Activated CD4-positive, alpha-beta memory T cell treated with anti-CD3 and anti-CD28 coated beads for 36 hours (primary cell): ENCODE measurements at regions of chr10 and their contacts with region 1.

Region 1: DNA sequence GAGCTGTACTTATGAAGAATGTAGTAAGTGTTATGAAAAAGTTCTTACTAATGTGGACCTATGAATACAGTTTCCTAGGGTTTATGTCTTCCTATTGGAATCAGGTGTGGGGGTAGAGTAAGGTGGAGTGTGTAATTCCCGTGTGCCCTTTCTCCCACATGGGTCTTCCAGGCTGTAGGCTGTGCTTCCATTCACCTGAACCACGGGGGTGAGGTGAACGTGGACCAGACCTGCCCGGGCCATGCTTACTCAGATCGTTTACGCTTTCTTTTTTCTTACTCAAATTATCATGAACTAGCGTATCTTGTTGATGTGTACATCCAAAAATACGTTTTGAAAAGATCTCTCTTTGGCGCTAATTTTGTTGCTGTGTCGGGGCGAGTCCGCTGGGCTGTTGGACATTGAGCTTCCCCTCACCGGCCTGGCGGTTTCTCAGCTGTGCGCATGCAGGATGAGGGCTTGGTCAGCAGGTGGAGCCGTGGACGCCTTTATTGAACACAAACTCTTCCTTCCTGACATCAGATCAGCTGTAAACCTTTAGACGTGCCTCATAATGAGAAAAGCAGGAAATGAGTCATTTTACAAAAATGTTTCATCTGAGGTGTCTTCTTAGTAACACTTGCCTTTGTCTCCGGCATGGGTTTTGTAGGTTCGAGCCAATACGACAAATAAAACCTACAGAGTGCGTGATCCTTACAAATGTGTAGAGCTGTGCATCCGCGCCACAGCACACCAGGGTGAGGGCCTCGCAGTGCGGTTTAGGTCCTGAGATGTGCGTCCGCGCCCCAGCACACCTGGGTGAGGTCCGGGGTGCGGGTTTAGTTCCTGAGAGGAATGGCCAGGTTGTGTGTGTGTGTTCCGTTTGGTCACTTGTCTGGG is 53.8 kb downstream of the WDR37 start:
- DNase-seq: peak; percentile 89
- H3K4me3 Mint-ChIP-seq: peak overlapping the region; percentile 10
- H3K27ac Mint-ChIP-seq: peak overlapping the region; percentile 77
- H3K4me1 Mint-ChIP-seq: peaks cover 24% of the 10 kb centered on the region
- H3K27me3 Mint-ChIP-seq: no peaks in the 10 kb centered on the region

Region 2: GRCh38 chr10:987870-988666 is 122.0 kb before region 1 on chr10 and contains the start of gene GTPBP4:
- CTCF ChIA-PET with region 1: no interaction called
- POLR2A ChIA-PET with region 1: no interaction called
- intact Hi-C with region 1: loop called (anchors 1 kb)
- DNase-seq: peak; percentile 98
- H3K4me3 Mint-ChIP-seq: peak within 1 kb of the TSS; percentile 93
- H3K27ac Mint-ChIP-seq: peak within 1 kb of the TSS; percentile 92
- H3K4me1 Mint-ChIP-seq: peaks cover 34% of the 10 kb centered on the region
- H3K27me3 Mint-ChIP-seq: no peaks in the 10 kb centered on the region
- total RNA-seq, gene GTPBP4: 107 TPM

Region 3: GRCh38 chr10:1094112-1095057 is 15.6 kb before region 1 on chr10:
- CTCF ChIA-PET with region 1: interaction called, 16 read pairs
- POLR2A ChIA-PET with region 1: interaction called, 3 read pairs
- intact Hi-C with region 1: loop called (anchors 1 kb)
- DNase-seq: peak; percentile 92
- H3K4me3 Mint-ChIP-seq: no peak overlapping the region
- H3K27ac Mint-ChIP-seq: no peak overlapping the region
- H3K4me1 Mint-ChIP-seq: peaks cover 4% of the 10 kb centered on the region
- H3K27me3 Mint-ChIP-seq: no peaks in the 10 kb centered on the region

Region 4: GRCh38 chr10:1323951-1324350 is 213.9 kb after region 1 on chr10:
- CTCF ChIA-PET with region 1: no interaction called
- POLR2A ChIA-PET with region 1: no interaction called
- intact Hi-C with region 1: loop called (anchors 10 kb)
- DNase-seq: peak; percentile 58
- H3K4me3 Mint-ChIP-seq: no peak overlapping the region
- H3K27ac Mint-ChIP-seq: no peak overlapping the region
- H3K4me1 Mint-ChIP-seq: peaks cover 13% of the 10 kb centered on the region
- H3K27me3 Mint-ChIP-seq: peaks cover 23% of the 10 kb centered on the region

Region 5: DNA sequence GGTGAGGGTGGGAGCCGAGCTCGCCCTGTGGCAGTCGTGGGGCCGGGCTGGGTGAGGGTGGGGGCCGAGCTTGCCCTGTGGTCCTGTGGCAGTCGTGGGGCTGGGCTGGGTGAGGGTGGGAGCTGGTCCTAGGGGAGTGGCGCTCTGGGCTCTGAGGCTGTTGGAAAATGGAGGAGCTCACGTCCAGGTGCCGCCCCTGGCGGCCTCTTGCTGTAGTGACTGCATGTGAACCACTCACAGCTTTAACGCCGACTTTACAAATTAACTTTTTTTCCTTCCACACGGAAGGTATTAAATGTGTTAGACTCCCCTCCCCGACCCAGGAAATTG is 258.8 kb after region 1 on chr10:
- CTCF ChIA-PET with region 1: interaction called, 28 read pairs
- POLR2A ChIA-PET with region 1: no interaction called
- intact Hi-C with region 1: no loop called
- DNase-seq: peak; percentile 60
- H3K4me3 Mint-ChIP-seq: no peak overlapping the region
- H3K27ac Mint-ChIP-seq: no peak overlapping the region
- H3K4me1 Mint-ChIP-seq: no peaks in the 10 kb centered on the region
- H3K27me3 Mint-ChIP-seq: peaks cover 23% of the 10 kb centered on the region